Aorta (tissue), 5 donors: ENCODE measurements at regions of chr1 and their contacts with region 1.

Region 1: DNA sequence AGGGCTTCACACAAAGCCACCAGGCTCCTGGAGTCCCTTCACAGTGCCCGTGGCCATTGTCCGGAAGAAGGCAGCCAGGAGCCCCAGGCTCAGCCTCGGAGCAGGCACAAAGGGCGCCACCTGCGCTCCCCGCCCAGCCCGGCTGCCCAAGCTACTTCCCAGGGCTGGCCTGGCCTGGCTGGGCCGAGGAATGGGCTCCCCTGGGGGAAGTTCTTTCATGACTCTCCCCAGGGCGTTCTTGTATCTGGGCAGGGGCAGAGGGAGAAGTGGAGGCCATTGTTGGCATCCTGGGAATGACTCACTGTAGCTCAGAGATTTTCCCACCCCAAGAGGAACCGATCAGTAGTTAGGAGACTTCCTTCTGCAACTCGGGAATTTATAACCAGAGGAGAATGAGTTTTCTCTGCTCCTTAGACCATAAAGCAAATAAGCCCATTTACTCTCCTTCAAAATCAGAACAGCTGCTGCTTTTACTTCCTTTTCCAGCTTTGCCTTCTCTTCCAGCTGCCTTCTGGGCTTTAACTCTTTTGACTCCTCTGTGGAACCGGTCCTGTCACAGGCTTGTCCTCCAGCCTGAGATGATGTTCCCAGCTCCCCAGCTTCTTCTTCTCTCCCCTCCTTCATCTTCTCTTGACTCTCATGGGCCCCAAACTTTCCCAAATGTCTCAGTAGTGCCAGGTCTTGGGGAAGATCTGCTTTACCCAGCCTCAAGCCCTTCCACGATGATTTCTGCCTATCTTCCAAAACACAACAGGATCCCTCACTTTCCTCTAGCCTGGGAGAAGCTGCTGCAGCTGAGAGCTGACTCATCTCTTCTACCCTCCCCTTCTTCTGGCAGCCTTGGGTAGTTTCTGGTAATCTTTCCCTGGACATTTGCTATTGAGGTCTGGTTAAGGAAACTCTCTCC is 118.7 kb upstream of the CD34 start:
- DNase-seq: peak; percentile 77 to 84
- ATAC-seq: peak; percentile 64
- H3K4me3 ChIP-seq: no peak overlapping the region
- H3K27ac ChIP-seq: peak overlapping the region; percentile 58 to 72
- H3K4me1 ChIP-seq: peaks cover 3 to 4% of the 10 kb centered on the region in 2 donors
- H3K27me3 ChIP-seq: no peaks in the 10 kb centered on the region

Region 2: GRCh38 chr1:208047476-208047934 is 17.9 kb after region 1 on chr1:
- intact Hi-C with region 1: loop called in 1 of 2 experiments (anchors 2 kb)
- DNase-seq: peak; percentile 80 to 83
- ATAC-seq: peak; percentile 92
- H3K4me3 ChIP-seq: no peak overlapping the region
- H3K27ac ChIP-seq: peak overlapping the region; percentile 49 to 90
- H3K4me1 ChIP-seq: peaks cover 0 to 3% of the 10 kb centered on the region in 2 donors
- H3K27me3 ChIP-seq: no peaks in the 10 kb centered on the region

Region 3: GRCh38 chr1:209207701-209208286 is 1178.2 kb after region 1 on chr1:
- intact Hi-C with region 1: loop called (anchors 10 kb)
- DNase-seq: peak; percentile 75 to 91
- ATAC-seq: peak; percentile 89
- H3K4me3 ChIP-seq: no peak overlapping the region
- H3K27ac ChIP-seq: no peak overlapping the region
- H3K4me1 ChIP-seq: no peaks in the 10 kb centered on the region
- H3K27me3 ChIP-seq: no peaks in the 10 kb centered on the region